ENCODE measurements at regions of chr2 and their contacts with region 1.

Region 1: GRCh38 chr2:37389989-37390765 is 45.7 kb downstream of the QPCT start:
- DNase-seq: peak; percentile 76
- H3K4me3 Mint-ChIP-seq: peak overlapping the region; percentile 8
- H3K27ac Mint-ChIP-seq: no peak overlapping the region
- H3K4me1 Mint-ChIP-seq: peaks cover 5% of the 10 kb centered on the region
- H3K27me3 Mint-ChIP-seq: peaks cover 15% of the 10 kb centered on the region

Region 2: GRCh38 chr2:37324786-37325624 is 65.2 kb before region 1 on chr2 and contains the start of gene PRKD3:
- intact Hi-C with region 1: loop called (anchors 1 kb)
- DNase-seq: peak; percentile 54
- H3K4me3 Mint-ChIP-seq: peak within 1 kb of the TSS; percentile 97
- H3K27ac Mint-ChIP-seq: peak within 1 kb of the TSS; percentile 96
- H3K4me1 Mint-ChIP-seq: peaks cover 37% of the 10 kb centered on the region
- H3K27me3 Mint-ChIP-seq: peaks cover 39% of the 10 kb centered on the region
- total RNA-seq, gene PRKD3: 23.9 and 24.3 TPM in 2 replicates

Region 3: GRCh38 chr2:37376421-37377186 is 13.6 kb before region 1 on chr2:
- intact Hi-C with region 1: loop called (anchors 1 kb)
- DNase-seq: peak; percentile 29
- H3K4me3 Mint-ChIP-seq: peak overlapping the region; percentile 34
- H3K27ac Mint-ChIP-seq: peak overlapping the region; percentile 88
- H3K4me1 Mint-ChIP-seq: peaks cover 51% of the 10 kb centered on the region
- H3K27me3 Mint-ChIP-seq: peaks cover 51% of the 10 kb centered on the region

Region 4: GRCh38 chr2:37635504-37636380 is 245.6 kb after region 1 on chr2:
- intact Hi-C with region 1: loop called (anchors 1 kb)
- DNase-seq: peak; percentile 63
- H3K4me3 Mint-ChIP-seq: peak overlapping the region; percentile 34
- H3K27ac Mint-ChIP-seq: peak overlapping the region; percentile 86
- H3K4me1 Mint-ChIP-seq: peaks cover 37% of the 10 kb centered on the region
- H3K27me3 Mint-ChIP-seq: peaks cover 18% of the 10 kb centered on the region

Region 5: DNA sequence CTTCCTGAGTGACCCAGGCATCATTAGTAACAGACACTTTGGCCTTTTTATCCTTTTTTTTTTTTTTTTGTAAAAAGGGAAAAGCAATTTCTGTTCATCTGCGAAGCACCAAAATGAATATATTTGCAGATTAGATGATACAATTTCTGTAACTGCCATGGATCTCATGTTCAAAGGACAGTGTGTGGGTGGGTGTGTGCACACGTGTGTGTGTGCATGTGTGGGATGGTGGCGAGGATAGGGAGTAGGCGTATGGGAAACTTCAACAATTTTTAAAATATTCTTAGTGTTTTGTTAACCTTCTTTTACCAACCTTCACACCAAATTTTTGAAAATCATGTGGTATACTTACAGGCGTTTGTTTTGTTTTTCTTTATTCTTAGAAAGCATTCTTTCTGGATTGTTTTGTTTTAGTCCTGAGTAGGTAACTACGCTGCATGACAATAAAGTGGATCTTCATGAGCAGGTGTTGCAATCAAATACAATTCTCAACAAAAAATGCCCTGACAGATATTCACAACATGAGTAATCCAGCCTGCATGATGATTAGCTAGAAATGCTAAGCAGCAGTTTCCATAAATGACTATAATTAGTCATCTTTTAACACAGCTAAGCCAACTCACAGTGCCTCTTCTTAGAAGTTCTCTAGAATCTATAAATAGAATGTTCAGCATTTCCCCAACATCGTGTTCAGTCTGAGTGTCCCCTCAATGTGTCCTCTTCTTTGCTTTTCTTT is 481.4 kb after region 1 on chr2:
- intact Hi-C with region 1: loop called (anchors 1 kb)
- DNase-seq: no peak
- H3K4me3 Mint-ChIP-seq: peak overlapping the region; percentile 83
- H3K27ac Mint-ChIP-seq: peak overlapping the region; percentile 100
- H3K4me1 Mint-ChIP-seq: peaks cover 51% of the 10 kb centered on the region
- H3K27me3 Mint-ChIP-seq: peaks cover 22% of the 10 kb centered on the region

Region 6: DNA sequence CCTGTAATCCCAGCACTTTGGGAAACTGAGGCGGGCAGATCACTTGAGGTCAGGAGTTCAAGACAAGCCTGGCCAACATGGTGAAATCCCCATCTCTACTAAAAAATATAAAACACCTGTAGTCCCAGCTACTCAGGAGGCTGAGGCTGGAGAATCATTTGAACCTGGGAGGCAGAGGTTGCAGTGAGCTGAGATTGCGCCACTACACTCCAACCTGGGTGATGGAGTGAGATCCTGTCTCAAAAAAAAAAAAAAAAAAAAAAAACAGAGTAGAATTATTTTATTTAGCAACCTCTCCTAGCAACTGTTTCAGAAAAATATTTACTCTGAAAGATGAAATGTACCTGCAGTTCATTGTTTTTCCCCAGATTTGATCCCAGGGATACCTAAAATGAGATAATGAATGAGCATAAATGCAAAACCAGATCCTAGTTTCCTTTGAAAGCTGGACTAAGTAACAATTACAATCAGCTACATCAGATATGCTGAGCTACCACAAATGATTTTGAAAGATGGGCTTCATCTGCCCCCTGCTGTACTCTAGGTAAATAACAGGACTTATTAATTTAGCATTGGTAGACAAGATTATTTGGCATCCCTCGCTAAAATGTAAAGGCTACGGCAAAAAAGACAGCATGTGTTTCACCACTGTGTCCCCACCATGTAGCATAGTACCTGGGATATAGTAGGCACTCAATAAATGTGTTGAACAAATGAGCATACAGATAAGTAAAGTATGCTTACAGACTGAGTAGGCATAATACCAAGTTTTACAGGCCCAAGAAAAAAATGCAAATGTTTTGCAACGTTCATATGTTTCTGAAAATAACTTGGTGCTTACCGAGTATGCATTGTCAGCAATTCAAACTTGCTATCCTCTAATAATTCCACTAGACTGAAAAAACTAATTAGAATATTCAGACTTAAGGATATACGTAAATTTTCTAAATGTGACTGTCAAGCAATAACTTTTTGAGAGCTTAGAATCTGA is 884.4 kb after region 1 on chr2:
- intact Hi-C with region 1: loop called (anchors 5 kb)
- DNase-seq: no peak
- H3K4me3 Mint-ChIP-seq: no peak overlapping the region
- H3K27ac Mint-ChIP-seq: no peak overlapping the region
- H3K4me1 Mint-ChIP-seq: peaks cover 12% of the 10 kb centered on the region
- H3K27me3 Mint-ChIP-seq: peaks cover 4% of the 10 kb centered on the region

Measured in activated T-helper 1 cell treated with anti-CD3 and anti-CD28 coated beads, Interleukin-12 subunit alpha, Interleukin-12 subunit beta, Interleukin-2, Interleukin-4 antibody, amounts not matched to agents 30 ng/mL and 10 ng/mL and 1 ng/mL, durations not matched to agents 14 hours and 24 hours and 36 hours (primary cell).